Mammary epithelial cell (primary cell): ENCODE measurements at regions of chr7 and their contacts with region 1.

Region 1: GRCh38 chr7:75866489-75867389 is 12.1 kb upstream of the RHBDD2 start:
- DNase-seq: peak; percentile 37
- H3K4me3 ChIP-seq: no peak overlapping the region
- H3K27ac ChIP-seq: no peak overlapping the region
- H3K4me1 ChIP-seq: peaks cover 3% of the 10 kb centered on the region
- H3K27me3 ChIP-seq: no peaks in the 10 kb centered on the region
- CTCF ChIP-seq: peak; percentile 98 to 100

Region 2: DNA sequence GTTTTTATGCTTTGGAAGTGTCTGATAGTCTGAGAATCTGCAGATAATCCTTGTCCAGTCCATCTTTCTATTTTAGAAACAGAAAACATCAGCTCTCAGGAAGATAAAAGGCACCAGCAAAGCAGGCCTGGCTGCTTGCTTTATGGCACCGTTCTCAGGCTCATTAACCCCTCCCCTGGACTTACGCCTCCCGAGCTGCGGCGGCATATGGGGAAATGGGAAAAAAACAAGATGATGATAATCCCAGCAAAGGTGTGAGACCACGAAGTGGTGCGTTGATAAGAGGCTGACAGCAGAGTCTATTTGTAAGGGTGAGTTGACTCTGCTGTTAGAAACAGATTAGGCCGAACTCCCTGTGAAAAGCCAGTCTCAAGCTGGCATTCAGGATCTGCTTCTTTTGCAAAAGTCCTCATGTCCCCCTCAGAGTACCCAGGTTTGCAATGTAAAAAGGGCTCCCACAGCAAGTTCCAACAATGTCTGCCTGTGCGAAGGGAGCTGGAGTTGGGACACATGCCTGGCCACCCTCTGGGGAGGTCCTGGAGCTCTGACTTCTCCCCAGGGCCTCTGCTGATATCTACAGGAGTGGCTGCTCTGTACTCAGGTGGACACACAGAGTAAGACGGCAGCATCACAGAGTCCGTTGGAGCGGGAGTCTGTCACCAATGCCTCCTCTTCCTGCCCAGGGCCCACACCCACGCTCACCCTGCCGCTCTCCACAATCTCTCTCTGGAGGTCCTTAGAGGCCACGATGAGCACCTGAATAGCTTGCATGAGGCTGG is 320.3 kb before region 1 on chr7:
- CTCF ChIA-PET with region 1: no interaction called
- dilution Hi-C with region 1: no loop called
- in situ Hi-C with region 1: no loop called
- intact Hi-C with region 1: no loop called
- DNase-seq: no peak
- H3K4me3 ChIP-seq: no peak overlapping the region
- H3K27ac ChIP-seq: no peak overlapping the region
- H3K4me1 ChIP-seq: no peaks in the 10 kb centered on the region
- H3K27me3 ChIP-seq: no peaks in the 10 kb centered on the region
- CTCF ChIP-seq: no peak

Region 3: DNA sequence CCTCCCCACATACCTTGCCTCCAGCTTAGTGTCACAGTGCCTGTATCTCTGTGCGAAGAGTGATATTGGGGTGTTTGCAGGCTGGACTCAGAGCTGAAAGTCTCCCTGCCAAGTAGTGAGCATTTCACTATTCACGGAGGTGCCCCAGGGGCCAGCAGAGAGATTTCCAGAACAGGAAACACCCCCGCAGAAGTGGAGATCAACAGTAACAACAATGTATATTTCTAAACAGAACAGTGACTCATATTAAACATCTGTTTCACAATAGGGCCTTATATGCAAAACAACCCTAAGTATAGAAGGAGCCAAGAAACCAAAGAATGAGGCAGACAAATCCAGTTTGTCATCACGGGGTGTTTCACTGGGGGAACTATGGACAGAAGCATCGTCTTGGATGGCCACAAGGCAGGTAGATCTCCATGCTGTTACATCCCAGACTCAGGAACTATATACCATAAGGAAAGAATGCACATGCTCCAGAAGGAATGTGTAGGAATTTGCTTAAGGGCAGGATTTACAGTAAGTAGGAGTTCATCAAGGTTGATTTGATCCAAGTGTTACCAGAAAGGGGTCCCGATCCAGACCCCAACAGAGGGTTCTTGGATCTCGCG is 23.8 kb before region 1 on chr7:
- CTCF ChIA-PET with region 1: interaction called, 14 read pairs
- dilution Hi-C with region 1: no loop called
- in situ Hi-C with region 1: no loop called
- intact Hi-C with region 1: no loop called
- DNase-seq: peak; percentile 93
- H3K4me3 ChIP-seq: no peak overlapping the region
- H3K27ac ChIP-seq: peak overlapping the region; percentile 43
- H3K4me1 ChIP-seq: peaks cover 16% of the 10 kb centered on the region
- H3K27me3 ChIP-seq: no peaks in the 10 kb centered on the region
- CTCF ChIP-seq: no peak

Region 4: GRCh38 chr7:75905785-75906604 is 39.3 kb after region 1 on chr7:
- CTCF ChIA-PET with region 1: no interaction called
- dilution Hi-C with region 1: no loop called
- in situ Hi-C with region 1: no loop called
- intact Hi-C with region 1: no loop called
- DNase-seq: peak; percentile 89
- H3K4me3 ChIP-seq: no peak overlapping the region
- H3K27ac ChIP-seq: no peak overlapping the region
- H3K4me1 ChIP-seq: no peaks in the 10 kb centered on the region
- H3K27me3 ChIP-seq: no peaks in the 10 kb centered on the region
- CTCF ChIP-seq: peak in 1 of 2 donors; percentile 13

Region 5: GRCh38 chr7:75977743-75978142 is 111.0 kb after region 1 on chr7:
- CTCF ChIA-PET with region 1: interaction called, 7 read pairs
- dilution Hi-C with region 1: no loop called
- in situ Hi-C with region 1: no loop called
- intact Hi-C with region 1: loop called (anchors 5 kb)
- DNase-seq: no peak
- H3K4me3 ChIP-seq: no peak overlapping the region
- H3K27ac ChIP-seq: no peak overlapping the region
- H3K4me1 ChIP-seq: no peaks in the 10 kb centered on the region
- H3K27me3 ChIP-seq: no peaks in the 10 kb centered on the region
- CTCF ChIP-seq: no peak

Region 6: GRCh38 chr7:76020031-76020714 is 153.4 kb after region 1 on chr7:
- CTCF ChIA-PET with region 1: interaction called, 9 read pairs
- dilution Hi-C with region 1: no loop called
- in situ Hi-C with region 1: loop called (anchors 10 to 25 kb)
- intact Hi-C with region 1: loop called (anchors 1 kb)
- DNase-seq: peak; percentile 20
- H3K4me3 ChIP-seq: no peak overlapping the region
- H3K27ac ChIP-seq: no peak overlapping the region
- H3K4me1 ChIP-seq: no peaks in the 10 kb centered on the region
- H3K27me3 ChIP-seq: no peaks in the 10 kb centered on the region
- CTCF ChIP-seq: peak; percentile 68 to 81

Region 7: DNA sequence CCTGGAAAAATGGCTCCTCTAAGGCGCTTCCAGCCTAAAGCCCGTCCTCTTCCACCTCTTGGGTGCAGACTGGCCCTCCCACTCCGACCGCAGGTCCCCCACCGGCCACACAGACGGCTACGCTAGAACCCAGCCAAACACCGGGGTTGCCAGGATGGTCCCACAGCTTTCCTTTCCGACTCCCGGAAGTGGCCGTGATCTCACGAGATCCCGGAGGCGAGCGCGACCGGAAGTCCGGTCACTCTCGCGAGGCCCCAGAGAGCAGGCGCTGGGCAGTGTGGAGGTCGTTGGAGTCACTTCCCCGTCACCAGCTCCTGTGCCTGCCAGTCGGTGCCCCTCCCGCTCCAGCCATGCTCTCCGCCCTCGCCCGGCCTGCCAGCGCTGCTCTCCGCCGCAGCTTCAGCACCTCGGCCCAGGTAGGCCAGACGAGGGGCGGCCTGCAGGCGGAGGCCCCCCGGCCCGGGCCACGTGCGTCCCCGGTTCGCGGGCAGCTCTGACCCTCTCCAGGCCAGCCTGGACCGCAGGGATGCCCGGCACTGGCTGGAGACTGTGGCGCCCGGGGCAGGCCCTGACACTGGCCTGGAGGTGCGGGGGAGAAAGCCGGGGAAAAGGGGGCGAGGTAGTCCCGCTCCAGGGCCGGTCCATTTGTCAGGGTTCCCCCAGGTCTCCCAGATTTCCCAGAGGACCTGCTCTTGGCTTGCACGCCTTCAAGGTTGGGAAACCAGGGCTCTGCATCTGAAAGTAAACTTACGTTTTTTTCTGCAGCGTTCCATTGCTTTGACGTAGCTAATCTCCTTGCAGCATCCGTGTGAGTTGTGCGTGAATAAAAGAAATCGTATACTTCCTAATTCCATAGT is 181.3 kb after region 1 on chr7 and contains the starts of genes MDH2 and STYXL1:
- CTCF ChIA-PET with region 1: no interaction called
- dilution Hi-C with region 1: no loop called
- in situ Hi-C with region 1: loop called in 1 of 2 experiments (anchors 25 kb)
- intact Hi-C with region 1: no loop called
- DNase-seq: peak; percentile 97
- H3K4me3 ChIP-seq: peak within 1 kb of the TSS; percentile 77 to 97 (median 84)
- H3K27ac ChIP-seq: peak within 1 kb of the TSS; percentile 89
- H3K4me1 ChIP-seq: peaks cover 9% of the 10 kb centered on the region
- H3K27me3 ChIP-seq: no peaks in the 10 kb centered on the region
- CTCF ChIP-seq: no peak
- total RNA-seq, gene MDH2: 44.0 to 188 TPM
- total RNA-seq, gene STYXL1: 43.0 to 44.3 TPM

Region 8: DNA sequence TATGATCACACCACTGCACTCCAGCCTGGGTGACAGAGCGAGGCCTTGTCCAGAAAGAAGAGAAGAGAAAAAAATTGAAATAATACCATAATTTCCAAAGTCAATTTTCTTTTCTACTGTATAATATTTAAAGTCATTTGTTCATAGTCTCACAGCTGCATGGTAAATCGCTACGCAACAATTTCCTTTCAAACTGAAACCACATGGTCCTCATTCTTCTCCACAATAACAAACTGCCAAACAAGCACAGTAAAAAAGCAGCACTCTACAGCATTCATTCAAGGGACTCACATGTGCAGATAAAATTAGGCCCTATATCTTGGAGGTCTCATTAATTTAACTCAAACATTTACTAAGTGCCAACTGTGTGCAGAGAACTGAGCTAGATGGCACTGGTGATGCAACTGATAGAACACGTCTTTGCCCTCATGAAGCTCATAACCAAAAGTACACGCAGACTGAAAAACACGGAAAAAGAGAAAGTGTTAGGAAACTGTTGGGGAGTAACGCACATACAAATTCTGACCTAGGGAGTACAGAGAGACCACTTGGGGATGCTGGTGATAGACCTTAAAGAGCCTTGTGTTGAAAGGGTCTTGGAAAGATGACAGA is 266.5 kb after region 1 on chr7:
- CTCF ChIA-PET with region 1: interaction called, 4 read pairs
- dilution Hi-C with region 1: no loop called
- in situ Hi-C with region 1: no loop called
- intact Hi-C with region 1: loop called (anchors 1 kb)
- DNase-seq: no peak
- H3K4me3 ChIP-seq: no peak overlapping the region
- H3K27ac ChIP-seq: no peak overlapping the region
- H3K4me1 ChIP-seq: no peaks in the 10 kb centered on the region
- H3K27me3 ChIP-seq: no peaks in the 10 kb centered on the region
- CTCF ChIP-seq: no peak

Region 9: GRCh38 chr7:76314042-76314721 is 447.4 kb after region 1 on chr7:
- CTCF ChIA-PET with region 1: no interaction called
- dilution Hi-C with region 1: no loop called
- in situ Hi-C with region 1: loop called in 1 of 2 experiments (anchors 25 kb)
- intact Hi-C with region 1: no loop called
- DNase-seq: peak; percentile 79
- H3K4me3 ChIP-seq: no peak overlapping the region
- H3K27ac ChIP-seq: no peak overlapping the region
- H3K4me1 ChIP-seq: peaks cover 24% of the 10 kb centered on the region
- H3K27me3 ChIP-seq: no peaks in the 10 kb centered on the region
- CTCF ChIP-seq: peak; percentile 96 to 100